ENCODE measurements at regions of chr2 and their contacts with region 1.

Region 1: GRCh38 chr2:237572021-237572741 is 5.8 kb downstream of the PRLH start:
- DNase-seq: peak; percentile 92 to 96 (median 96)
- ATAC-seq: peak; percentile 88 to 91
- H3K4me3 ChIP-seq: no peak overlapping the region
- H3K27ac ChIP-seq: no peak overlapping the region
- H3K4me1 ChIP-seq: no peaks in the 10 kb centered on the region
- H3K27me3 ChIP-seq: no peaks in the 10 kb centered on the region

Region 2: DNA sequence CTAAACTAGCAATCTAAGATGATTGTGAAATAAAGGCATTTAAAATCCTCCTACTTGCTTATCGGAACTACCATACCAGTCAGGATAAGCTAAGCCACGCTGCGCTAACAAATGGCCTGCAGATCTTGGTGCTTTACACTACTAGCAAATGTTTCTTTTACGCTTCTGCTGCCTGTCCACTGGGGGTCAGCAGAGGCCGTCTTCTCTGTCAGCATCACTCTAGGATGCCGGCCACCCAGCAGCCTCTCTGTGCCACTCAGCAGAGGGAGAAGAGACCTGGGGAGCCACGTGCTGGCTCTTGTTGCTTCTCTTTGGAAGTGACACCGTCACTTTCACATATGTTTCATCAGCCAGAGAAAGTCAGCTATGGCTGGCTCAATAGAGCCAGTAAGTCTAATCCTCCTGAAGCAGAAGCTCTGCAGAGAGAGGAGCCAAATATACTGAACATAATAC is 449.9 kb before region 1 on chr2:
- intact Hi-C with region 1: loop called in 2 of 4 experiments (anchors 10 kb)
- DNase-seq: peak; percentile 75 to 88 (median 82)
- ATAC-seq: peak; percentile 78 to 84
- H3K4me3 ChIP-seq: no peak overlapping the region
- H3K27ac ChIP-seq: no peak overlapping the region
- H3K4me1 ChIP-seq: no peaks in the 10 kb centered on the region
- H3K27me3 ChIP-seq: no peaks in the 10 kb centered on the region

Region 3: DNA sequence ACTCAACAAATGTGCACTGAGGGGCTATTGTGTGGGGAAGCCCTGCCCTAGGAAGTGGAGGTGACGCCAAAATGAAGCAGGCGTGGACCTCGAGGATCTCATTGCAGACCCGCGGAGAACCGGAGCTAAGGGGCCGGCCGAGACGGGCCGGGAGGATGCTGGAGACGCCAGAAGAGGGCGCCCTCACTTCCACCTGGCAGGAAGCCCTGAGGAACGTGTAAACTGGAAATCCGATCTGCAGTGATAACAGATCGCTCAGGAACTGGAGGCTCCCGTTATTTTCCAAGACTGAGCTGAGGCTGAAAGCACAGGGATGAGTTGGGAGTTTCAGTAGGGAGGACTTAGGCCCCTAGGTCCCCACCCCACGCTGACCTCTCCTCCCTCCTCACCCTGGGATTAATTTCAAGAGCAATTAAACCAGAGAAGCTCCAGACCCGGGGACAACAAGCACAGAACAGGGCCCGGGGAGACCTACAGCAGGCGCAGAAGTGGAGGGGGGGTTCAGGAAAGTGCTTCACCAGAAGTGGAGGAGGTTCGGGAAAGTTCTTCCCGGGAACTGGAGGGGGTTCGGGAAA is 150.6 kb before region 1 on chr2:
- intact Hi-C with region 1: loop called in 1 of 4 experiments (anchors 10 kb)
- DNase-seq: peak; percentile 83 to 92 (median 90)
- ATAC-seq: peak; percentile 83 to 90
- H3K4me3 ChIP-seq: peak overlapping the region; percentile 16
- H3K27ac ChIP-seq: no peak overlapping the region
- H3K4me1 ChIP-seq: peaks cover 3% of the 10 kb centered on the region
- H3K27me3 ChIP-seq: no peaks in the 10 kb centered on the region

Region 4: DNA sequence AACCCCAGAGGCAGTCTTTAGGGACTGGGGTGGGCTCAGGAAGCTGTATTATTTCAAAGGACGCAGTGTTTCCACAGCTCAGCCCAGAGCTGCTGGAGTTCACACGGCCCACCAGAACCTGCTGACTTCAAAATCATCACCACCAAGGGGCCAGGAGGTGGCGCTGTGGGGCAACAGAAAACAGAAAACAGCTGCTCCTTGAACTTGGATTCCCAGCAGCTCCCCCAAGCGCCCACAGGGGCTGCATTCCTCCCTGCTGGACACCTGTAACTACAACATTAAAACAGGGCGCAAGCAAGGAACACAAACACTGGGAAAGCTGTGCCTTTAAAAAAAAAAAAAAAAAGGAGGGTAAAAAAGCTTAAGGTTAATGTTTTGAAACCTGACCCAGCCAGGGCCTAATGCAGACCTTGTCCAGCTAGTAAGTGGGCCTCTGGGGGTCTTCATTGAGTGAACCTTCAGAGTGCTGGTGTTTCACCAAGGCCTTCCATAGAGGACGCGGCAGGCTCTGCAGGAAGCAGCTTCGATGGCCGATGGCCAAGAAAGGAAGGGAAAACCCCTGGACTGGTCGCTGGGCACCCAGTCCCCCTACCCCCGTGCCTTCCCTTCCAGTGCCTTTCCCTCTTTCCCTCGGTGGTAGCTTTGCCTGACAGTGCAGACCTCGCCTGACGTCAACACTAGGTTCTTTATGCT is 59.3 kb before region 1 on chr2:
- intact Hi-C with region 1: loop called in 3 of 4 experiments (anchors 2 to 5 kb)
- DNase-seq: peak; percentile 86 to 94 (median 92)
- ATAC-seq: peak; percentile 47 to 74
- H3K4me3 ChIP-seq: no peak overlapping the region
- H3K27ac ChIP-seq: peak overlapping the region; percentile 22
- H3K4me1 ChIP-seq: peaks cover 7% of the 10 kb centered on the region
- H3K27me3 ChIP-seq: no peaks in the 10 kb centered on the region